ENCODE measurements at regions of chrX and their contacts with region 1.

Region 1: DNA sequence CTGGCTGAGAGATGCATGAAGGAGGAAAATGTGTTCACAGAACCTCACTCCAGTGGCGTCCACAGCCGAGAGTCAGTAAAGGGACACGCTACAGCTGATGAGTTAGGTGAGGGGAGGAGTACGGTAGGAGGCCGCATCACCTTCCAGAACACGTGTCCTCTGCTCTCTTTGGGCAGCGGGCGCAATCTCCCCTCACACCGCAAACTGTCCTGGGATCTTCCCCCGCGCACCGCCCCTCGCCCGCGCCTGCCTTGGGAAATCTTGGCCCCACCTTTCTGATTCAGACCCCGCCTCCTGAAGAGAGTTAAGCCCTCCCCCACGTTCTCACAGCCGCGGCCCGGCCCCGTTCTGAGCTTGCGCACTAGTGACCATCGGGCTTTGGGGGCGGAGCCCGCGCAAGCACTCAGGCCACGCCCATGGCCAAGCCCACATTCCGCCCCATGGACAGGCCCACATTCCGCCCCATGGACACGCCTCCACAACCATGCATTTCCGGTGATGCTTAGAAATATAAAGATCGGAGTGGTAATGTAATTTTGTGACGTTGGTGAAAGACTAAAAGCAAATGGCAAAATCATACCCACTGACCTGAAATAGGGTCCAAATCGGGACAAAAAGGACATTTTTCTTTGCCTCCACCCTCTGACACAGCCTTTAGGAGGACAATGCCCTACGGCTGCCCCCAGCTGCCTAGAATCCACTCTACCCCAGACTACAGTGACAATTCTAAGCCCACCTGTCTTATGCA is 13.3 kb downstream of the SMIM10 start:
- DNase-seq: peak; percentile 78 to 90 (median 87)
- ATAC-seq: peak; percentile 100
- H3K4me3 ChIP-seq: peak overlapping the region; percentile 59
- H3K4me3 Mint-ChIP-seq: peak overlapping the region; percentile 83 to 94 (median 88)
- H3K27ac ChIP-seq: peak overlapping the region; percentile 46
- H3K27ac Mint-ChIP-seq: peak overlapping the region; percentile 10 to 89 (median 76)
- H3K4me1 ChIP-seq: no peaks in the 10 kb centered on the region
- H3K4me1 Mint-ChIP-seq: peaks cover 0 to 19% (median 10%) of the 10 kb centered on the region in 7 donors
- H3K27me3 ChIP-seq: no peaks in the 10 kb centered on the region
- H3K27me3 Mint-ChIP-seq: peaks cover 0 to 15% (median 0%) of the 10 kb centered on the region in 5 donors

Region 2: DNA sequence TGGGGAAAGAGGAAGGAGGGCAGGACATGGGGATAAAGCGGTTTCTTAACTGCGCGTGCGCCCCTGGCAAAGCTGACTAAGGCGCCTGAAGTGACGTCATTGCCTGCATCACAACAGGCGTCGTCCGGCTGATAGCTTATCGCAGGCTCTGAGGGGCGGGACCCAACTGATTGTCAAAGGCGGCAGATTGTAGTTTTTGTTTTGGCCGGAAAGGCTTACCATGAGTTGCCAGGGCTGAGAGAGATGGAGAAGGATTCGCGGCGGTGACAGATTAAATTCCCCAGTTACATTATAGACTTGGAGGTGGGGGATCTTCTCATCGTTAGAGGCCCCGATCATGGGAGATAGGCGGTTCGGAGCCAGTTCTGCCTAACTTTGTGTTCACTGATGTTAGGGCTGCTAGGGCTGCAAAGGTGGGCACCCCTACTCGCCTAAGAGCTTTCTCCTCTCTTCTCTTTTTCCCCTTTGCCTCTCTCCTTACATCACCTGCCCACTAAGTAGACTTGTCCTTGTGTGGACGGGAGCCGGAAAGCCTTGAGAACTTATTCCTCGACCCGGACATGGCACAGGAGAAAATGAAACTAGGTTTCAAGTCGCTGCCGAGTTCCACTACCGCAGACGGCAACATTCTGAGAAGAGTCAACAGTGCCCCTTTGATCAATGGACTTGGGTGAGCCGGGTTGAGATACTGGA is 196.9 kb before region 1 on chrX:
- CTCF ChIA-PET with region 1: no interaction called
- POLR2A ChIA-PET with region 1: no interaction called
- intact Hi-C with region 1: loop called in 1 of 2 experiments (anchors 10 kb)
- DNase-seq: peak; percentile 56 to 91 (median 85)
- ATAC-seq: peak; percentile 93
- H3K4me3 ChIP-seq: peak overlapping the region; percentile 79
- H3K4me3 Mint-ChIP-seq: peak overlapping the region; percentile 89 to 99 (median 95)
- H3K27ac ChIP-seq: peak overlapping the region; percentile 94
- H3K27ac Mint-ChIP-seq: peak overlapping the region; percentile 87 to 100 (median 97)
- H3K4me1 ChIP-seq: peaks cover 4% of the 10 kb centered on the region in 2 donors
- H3K4me1 Mint-ChIP-seq: peaks cover 8 to 39% (median 27%) of the 10 kb centered on the region in 7 donors
- H3K27me3 ChIP-seq: no peaks in the 10 kb centered on the region
- H3K27me3 Mint-ChIP-seq: peaks cover 0 to 2% (median 0%) of the 10 kb centered on the region in 5 donors

Region 3: DNA sequence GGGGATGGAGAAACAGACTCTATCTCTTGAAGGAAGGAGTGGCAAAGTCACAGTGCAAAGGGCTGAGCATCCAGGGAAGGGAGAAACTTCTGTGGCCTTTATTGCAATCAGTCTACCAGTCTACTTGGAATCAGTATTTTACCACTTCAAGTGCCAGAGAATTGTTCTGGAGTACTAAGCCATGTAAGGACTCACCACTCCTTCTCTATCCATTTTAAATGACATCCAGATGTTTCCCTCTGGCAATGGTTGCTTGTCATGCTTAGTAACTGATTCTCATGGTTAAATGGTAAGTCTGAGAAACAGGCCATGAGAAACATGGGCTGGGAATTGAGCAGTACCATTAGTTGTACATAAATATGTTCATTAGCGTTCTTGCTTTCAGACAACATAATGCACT is 34.3 kb before region 1 on chrX:
- CTCF ChIA-PET with region 1: no interaction called
- POLR2A ChIA-PET with region 1: no interaction called
- intact Hi-C with region 1: loop called (anchors 1 kb)
- DNase-seq: no peak
- ATAC-seq: no peak
- H3K4me3 ChIP-seq: no peak overlapping the region
- H3K4me3 Mint-ChIP-seq: no peak overlapping the region
- H3K27ac ChIP-seq: no peak overlapping the region
- H3K27ac Mint-ChIP-seq: no peak overlapping the region
- H3K4me1 ChIP-seq: no peaks in the 10 kb centered on the region
- H3K4me1 Mint-ChIP-seq: peaks cover 0 to 1% (median 0%) of the 10 kb centered on the region in 7 donors
- H3K27me3 ChIP-seq: no peaks in the 10 kb centered on the region
- H3K27me3 Mint-ChIP-seq: no peaks in the 10 kb centered on the region

Region 4: GRCh38 chrX:135050603-135051002 is 46.6 kb after region 1 on chrX:
- CTCF ChIA-PET with region 1: interaction called, 3 read pairs
- POLR2A ChIA-PET with region 1: no interaction called
- intact Hi-C with region 1: loop called (anchors 1 kb)
- DNase-seq: no peak
- ATAC-seq: no peak
- H3K4me3 ChIP-seq: no peak overlapping the region
- H3K4me3 Mint-ChIP-seq: peak overlapping the region; percentile 69 to 95 (median 90)
- H3K27ac ChIP-seq: no peak overlapping the region
- H3K27ac Mint-ChIP-seq: peak overlapping the region in 8 of 9 donors; percentile 77 to 95 (median 86)
- H3K4me1 ChIP-seq: no peaks in the 10 kb centered on the region
- H3K4me1 Mint-ChIP-seq: peaks cover 12 to 26% (median 24%) of the 10 kb centered on the region in 7 donors
- H3K27me3 ChIP-seq: no peaks in the 10 kb centered on the region
- H3K27me3 Mint-ChIP-seq: no peaks in the 10 kb centered on the region

Region 5: GRCh38 chrX:135086197-135086854 is 82.3 kb after region 1 on chrX:
- CTCF ChIA-PET with region 1: no interaction called
- POLR2A ChIA-PET with region 1: no interaction called
- intact Hi-C with region 1: loop called in 1 of 2 experiments (anchors 1 kb)
- DNase-seq: peak in 7 of 9 donors; percentile 42 to 72 (median 62)
- ATAC-seq: peak; percentile 100
- H3K4me3 ChIP-seq: no peak overlapping the region
- H3K4me3 Mint-ChIP-seq: no peak overlapping the region
- H3K27ac ChIP-seq: no peak overlapping the region
- H3K27ac Mint-ChIP-seq: peak overlapping the region in 2 of 9 donors; percentile 11 to 22
- H3K4me1 ChIP-seq: no peaks in the 10 kb centered on the region
- H3K4me1 Mint-ChIP-seq: peaks cover 0 to 6% (median 5%) of the 10 kb centered on the region in 7 donors
- H3K27me3 ChIP-seq: no peaks in the 10 kb centered on the region
- H3K27me3 Mint-ChIP-seq: peaks cover 0 to 6% (median 0%) of the 10 kb centered on the region in 5 donors

Region 6: GRCh38 chrX:135347381-135348016 is 343.4 kb after region 1 on chrX:
- CTCF ChIA-PET with region 1: no interaction called
- POLR2A ChIA-PET with region 1: no interaction called
- intact Hi-C with region 1: no loop called
- DNase-seq: no peak
- ATAC-seq: no peak
- H3K4me3 ChIP-seq: no peak overlapping the region
- H3K4me3 Mint-ChIP-seq: no peak overlapping the region
- H3K27ac ChIP-seq: no peak overlapping the region
- H3K27ac Mint-ChIP-seq: no peak overlapping the region
- H3K4me1 ChIP-seq: peaks cover 3% of the 10 kb centered on the region in 2 donors
- H3K4me1 Mint-ChIP-seq: peaks cover 15 to 33% (median 24%) of the 10 kb centered on the region in 7 donors
- H3K27me3 ChIP-seq: no peaks in the 10 kb centered on the region
- H3K27me3 Mint-ChIP-seq: no peaks in the 10 kb centered on the region

Measured in naive thymus-derived CD4-positive, alpha-beta T cell (primary cell).